ENCODE measurements at regions of chr13 and their contacts with region 1.

Region 1: DNA sequence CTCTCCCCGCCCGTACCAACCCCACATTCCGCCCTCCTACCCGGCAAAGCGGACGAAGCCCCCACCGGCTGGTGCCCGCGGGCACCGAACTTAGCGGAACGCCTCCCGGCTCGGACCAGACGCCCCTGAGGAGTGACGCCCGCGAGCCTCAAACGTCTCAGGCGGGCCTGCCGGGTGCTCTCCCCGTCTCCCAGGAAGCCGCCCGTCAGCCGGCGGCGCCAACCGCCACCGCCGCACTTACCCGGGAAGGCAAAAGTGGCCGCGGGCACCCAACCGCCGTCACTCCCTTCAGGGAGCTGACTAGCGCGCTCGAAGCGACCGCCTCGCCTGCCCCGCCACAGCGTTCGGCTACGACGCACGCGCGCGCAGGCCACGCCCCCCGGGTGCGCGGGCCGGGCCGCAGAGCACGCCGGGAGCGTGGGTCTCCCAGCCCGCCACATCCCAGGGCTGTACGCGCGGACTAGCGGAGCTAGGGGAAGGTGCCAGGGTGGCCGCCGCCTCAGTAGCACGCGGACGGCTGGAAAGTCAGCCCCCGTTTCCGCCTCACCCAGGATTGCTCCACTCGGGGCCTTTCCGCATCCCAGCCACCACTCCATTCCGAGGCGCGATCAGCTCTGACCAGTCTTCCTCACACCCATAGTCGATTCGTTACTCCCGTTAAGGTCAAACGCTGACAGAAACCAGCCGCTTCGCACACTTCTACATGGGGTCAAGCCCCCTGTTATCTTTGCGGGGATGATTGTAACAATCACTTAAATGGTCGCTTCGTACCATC is at the start of gene TEX30:
- DNase-seq: peak; percentile 89
- ATAC-seq: peak; percentile 98
- total RNA-seq, gene TEX30: 6.8 TPM

Region 2: GRCh38 chr13:101098873-101099272 is 1674.8 kb before region 1 on chr13:
- intact Hi-C with region 1: no loop called
- DNase-seq: no peak
- ATAC-seq: no peak

Region 3: GRCh38 chr13:102596147-102597028 is 177.2 kb before region 1 on chr13 and contains the start of gene TPP2:
- intact Hi-C with region 1: loop called (anchors 10 kb)
- DNase-seq: peak; percentile 99
- ATAC-seq: peak; percentile 99
- total RNA-seq, gene TPP2: 44.8 TPM

Measured in sciatic nerve (tissue), 2 donors.